Psoas muscle (tissue), 8 donors: ENCODE measurements at regions of chr13 and their contacts with region 1.

Region 1: DNA sequence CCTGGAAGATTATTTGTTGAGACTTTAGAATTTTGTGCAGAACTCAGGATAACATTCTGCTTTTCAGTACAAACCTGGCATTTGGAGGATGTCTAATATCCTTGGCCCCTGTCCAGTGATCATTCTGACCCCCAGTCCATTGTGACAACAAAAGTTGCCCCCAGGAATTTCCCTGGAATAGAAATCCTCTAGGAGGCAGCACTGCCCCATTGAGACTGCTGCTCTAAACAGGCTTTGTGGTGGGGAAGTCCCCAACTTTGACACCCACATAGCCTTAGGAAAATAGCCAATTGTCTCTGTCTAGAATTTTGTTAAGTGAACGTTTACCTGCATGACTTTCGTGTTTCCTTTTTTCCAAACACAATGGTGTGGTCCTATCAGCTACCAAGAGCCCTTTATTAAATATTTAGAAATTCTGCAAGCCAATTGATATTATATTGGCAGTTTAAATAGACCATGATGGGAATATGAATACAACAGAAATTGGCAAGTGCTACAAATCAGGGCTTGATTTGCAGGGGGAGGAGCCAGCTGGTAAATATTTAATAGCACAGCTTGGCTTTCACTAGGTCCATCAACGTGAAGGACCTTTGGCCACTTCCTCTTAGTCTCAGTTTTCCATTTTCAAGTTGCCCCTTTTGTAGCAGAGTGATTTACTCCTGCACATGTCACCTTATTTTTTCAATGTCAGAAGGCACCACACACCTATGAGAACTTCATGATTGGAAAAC is 451.7 kb downstream of the EFNB2 start:
- DNase-seq: no peak
- ATAC-seq: no peak
- H3K4me3 ChIP-seq: no peak overlapping the region
- H3K27ac ChIP-seq: no peak overlapping the region
- H3K4me1 ChIP-seq: no peaks in the 10 kb centered on the region
- H3K27me3 ChIP-seq: peaks cover 0 to 2% (median 0%) of the 10 kb centered on the region in 3 donors
- CTCF ChIP-seq: peak; percentile 43

Region 2: GRCh38 chr13:105960326-105960725 is 123.5 kb before region 1 on chr13:
- intact Hi-C with region 1: no loop called
- DNase-seq: no peak
- ATAC-seq: no peak
- H3K4me3 ChIP-seq: no peak overlapping the region
- H3K27ac ChIP-seq: no peak overlapping the region
- H3K4me1 ChIP-seq: no peaks in the 10 kb centered on the region
- H3K27me3 ChIP-seq: peaks cover 0 to 4% (median 0%) of the 10 kb centered on the region in 3 donors
- CTCF ChIP-seq: no peak

Region 3: DNA sequence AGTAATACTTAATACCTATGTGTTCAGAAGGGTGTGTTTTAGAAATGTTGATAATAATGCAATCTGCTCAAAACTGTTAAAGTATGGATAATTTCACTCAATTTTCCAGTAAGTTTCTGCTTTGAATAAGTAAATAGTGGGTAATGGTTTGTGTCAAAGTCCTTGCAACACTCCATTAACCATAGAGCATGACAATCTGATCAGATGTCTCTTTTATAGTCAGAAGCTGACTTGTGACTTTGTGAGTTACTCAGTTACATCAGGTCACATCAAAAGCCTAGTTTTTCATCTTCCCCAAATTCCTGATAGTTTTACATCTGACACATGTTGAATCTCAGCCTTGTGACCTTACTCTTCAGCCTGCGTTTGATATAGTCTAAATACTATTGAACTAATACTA is 113.7 kb after region 1 on chr13:
- intact Hi-C with region 1: no loop called
- DNase-seq: no peak
- ATAC-seq: no peak
- H3K4me3 ChIP-seq: no peak overlapping the region
- H3K27ac ChIP-seq: no peak overlapping the region
- H3K4me1 ChIP-seq: no peaks in the 10 kb centered on the region
- H3K27me3 ChIP-seq: no peaks in the 10 kb centered on the region
- CTCF ChIP-seq: no peak

Region 4: DNA sequence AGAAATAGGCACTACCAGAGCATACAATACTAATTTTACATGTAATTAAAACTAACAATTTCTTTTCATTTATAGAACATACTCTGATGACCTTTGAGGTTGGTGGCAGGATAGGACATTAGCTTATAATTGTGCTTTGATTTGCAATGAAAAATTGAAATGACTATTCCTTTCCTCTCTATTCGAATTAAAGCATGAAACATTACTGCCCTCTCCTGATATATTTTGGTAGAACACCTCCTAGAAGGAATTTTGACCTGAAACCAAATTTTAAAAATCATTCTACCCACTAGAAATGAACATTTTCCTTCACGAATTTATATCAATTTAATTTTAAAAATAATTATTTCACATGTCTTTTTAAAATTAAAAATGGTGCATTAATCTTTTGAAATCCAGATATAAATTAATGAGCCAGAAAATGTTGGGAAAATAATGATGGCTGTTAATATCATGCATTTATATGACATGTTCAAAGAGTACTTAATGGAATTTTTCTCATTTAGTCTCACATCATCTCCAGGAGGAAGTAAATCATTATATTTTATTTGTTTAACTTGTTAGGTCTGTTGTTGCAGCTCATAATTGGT is 1040.4 kb after region 1 on chr13:
- intact Hi-C with region 1: loop called in 1 of 2 experiments (anchors 10 kb)
- DNase-seq: no peak
- ATAC-seq: no peak
- H3K4me3 ChIP-seq: no peak overlapping the region
- H3K27ac ChIP-seq: no peak overlapping the region
- H3K4me1 ChIP-seq: no peaks in the 10 kb centered on the region
- H3K27me3 ChIP-seq: peaks cover 0 to 2% (median 2%) of the 10 kb centered on the region in 3 donors
- CTCF ChIP-seq: peak; percentile 49